ENCODE measurements at regions of chr7 and their contacts with region 1.

Region 1: DNA sequence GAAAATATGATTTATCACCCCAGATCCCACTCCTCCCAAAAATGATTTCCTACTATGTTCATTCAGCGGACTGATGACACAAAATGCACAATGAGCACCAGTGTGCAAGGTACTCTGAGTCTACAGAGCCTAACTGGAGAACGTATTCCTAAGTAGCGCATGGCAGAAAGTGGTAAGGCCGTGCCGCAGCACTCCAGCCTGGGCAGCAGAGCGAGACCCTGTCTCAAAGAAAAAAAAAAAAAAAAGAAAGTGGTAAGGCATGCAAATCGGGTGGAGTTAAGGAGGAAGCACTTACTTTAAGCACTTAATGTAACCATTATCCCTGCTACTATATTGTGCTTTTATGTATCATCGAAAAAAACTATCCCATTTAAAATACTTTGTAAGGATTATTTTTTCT is 25.5 kb downstream of the CYP51A1 start:
- DNase-seq: no peak
- ATAC-seq: no peak
- H3K4me3 ChIP-seq: no peak overlapping the region
- H3K27ac ChIP-seq: no peak overlapping the region
- H3K4me1 ChIP-seq: no peaks in the 10 kb centered on the region
- H3K27me3 ChIP-seq: no peaks in the 10 kb centered on the region

Region 2: DNA sequence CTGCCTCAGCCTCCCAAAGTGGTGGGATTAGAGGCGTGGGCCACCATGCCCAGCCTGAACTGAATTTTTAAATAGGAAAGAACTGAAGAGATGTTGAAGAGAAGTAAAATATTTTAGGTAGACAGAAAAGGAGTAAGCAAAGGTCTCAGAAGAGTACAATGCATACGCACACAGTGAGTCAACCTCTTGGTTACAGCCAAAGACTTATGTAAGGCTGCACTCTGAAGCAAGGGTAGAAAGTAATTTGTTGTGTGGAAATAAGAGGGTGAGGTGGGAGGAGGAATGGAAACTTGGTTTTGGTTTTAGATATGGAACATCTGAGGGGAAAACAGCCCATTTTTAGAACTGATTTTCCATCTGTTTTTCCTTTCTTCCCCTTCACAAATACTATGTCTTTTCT is 119.3 kb after region 1 on chr7:
- intact Hi-C with region 1: loop called in 1 of 2 experiments (anchors 10 kb)
- DNase-seq: no peak
- ATAC-seq: no peak
- H3K4me3 ChIP-seq: no peak overlapping the region
- H3K27ac ChIP-seq: no peak overlapping the region
- H3K4me1 ChIP-seq: no peaks in the 10 kb centered on the region
- H3K27me3 ChIP-seq: no peaks in the 10 kb centered on the region